ENCODE measurements at regions of chr4 and their contacts with region 1.

Region 1: GRCh38 chr4:151362404-151363164 is 37.2 kb upstream of the SH3D19 start:
- DNase-seq: peak; percentile 92
- H3K4me3 Mint-ChIP-seq: no peak overlapping the region
- H3K27ac Mint-ChIP-seq: no peak overlapping the region
- H3K4me1 Mint-ChIP-seq: peaks cover 2% of the 10 kb centered on the region
- H3K27me3 Mint-ChIP-seq: peaks cover 13% of the 10 kb centered on the region

Region 2: GRCh38 chr4:151276787-151277562 is 85.6 kb before region 1 on chr4 and contains the start of gene PRSS48:
- intact Hi-C with region 1: loop called (anchors 2 kb)
- DNase-seq: peak; percentile 82
- H3K4me3 Mint-ChIP-seq: no peak within 1 kb of the TSS
- H3K27ac Mint-ChIP-seq: no peak within 1 kb of the TSS
- H3K4me1 Mint-ChIP-seq: no peaks in the 10 kb centered on the region
- H3K27me3 Mint-ChIP-seq: peaks cover 9% of the 10 kb centered on the region
- total RNA-seq, gene PRSS48: not detected in 2 replicates

Region 3: DNA sequence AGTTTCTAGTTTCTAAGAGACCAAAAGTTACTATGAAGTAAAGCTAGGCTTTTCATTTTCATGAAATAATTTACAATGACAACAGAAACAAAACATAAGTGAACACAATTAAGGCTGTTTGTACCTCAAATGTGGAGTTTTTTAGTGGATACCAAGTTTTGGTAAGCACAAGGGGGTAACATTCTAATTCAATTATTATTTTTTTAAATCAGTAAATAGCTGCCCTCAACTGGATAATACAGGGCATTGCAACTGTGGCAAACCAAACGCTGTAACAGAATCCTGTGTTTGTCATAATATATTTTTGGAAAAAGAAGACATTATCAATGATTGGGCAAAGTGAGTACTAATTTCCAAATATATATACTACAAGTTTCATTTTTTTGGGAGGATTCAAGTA is 1023.0 kb after region 1 on chr4:
- intact Hi-C with region 1: loop called (anchors 10 kb)
- DNase-seq: no peak
- H3K4me3 Mint-ChIP-seq: no peak overlapping the region
- H3K27ac Mint-ChIP-seq: no peak overlapping the region
- H3K4me1 Mint-ChIP-seq: peaks cover 14% of the 10 kb centered on the region
- H3K27me3 Mint-ChIP-seq: no peaks in the 10 kb centered on the region